OCI-LY7 (cell line): ENCODE measurements at regions of chr4 and their contacts with region 1.

Region 1: GRCh38 chr4:152663203-152664066 is 16.4 kb downstream of the TMEM154 start:
- DNase-seq: peak; percentile 90
- H3K4me3 ChIP-seq: peak overlapping the region; percentile 78
- H3K27ac ChIP-seq: peak overlapping the region; percentile 98
- H3K4me1 ChIP-seq: peaks cover 86% of the 10 kb centered on the region
- CTCF ChIP-seq: no peak

Region 2: GRCh38 chr4:152161676-152162330 is 501.6 kb before region 1 on chr4:
- CTCF ChIA-PET with region 1: no interaction called
- POLR2A ChIA-PET with region 1: no interaction called
- intact Hi-C with region 1: no loop called
- DNase-seq: no peak
- H3K4me3 ChIP-seq: no peak overlapping the region
- H3K27ac ChIP-seq: no peak overlapping the region
- H3K4me1 ChIP-seq: no peaks in the 10 kb centered on the region
- CTCF ChIP-seq: no peak

Region 3: GRCh38 chr4:152460488-152460887 is 202.9 kb before region 1 on chr4:
- CTCF ChIA-PET with region 1: no interaction called
- POLR2A ChIA-PET with region 1: interaction called, 5 read pairs
- intact Hi-C with region 1: loop called (anchors 1 kb)
- DNase-seq: peak; percentile 29
- H3K4me3 ChIP-seq: no peak overlapping the region
- H3K27ac ChIP-seq: no peak overlapping the region
- H3K4me1 ChIP-seq: peaks cover 71% of the 10 kb centered on the region
- CTCF ChIP-seq: peak; percentile 74

Region 4: GRCh38 chr4:152535903-152536544 is 127.4 kb before region 1 on chr4 and contains the start of gene FBXW7:
- CTCF ChIA-PET with region 1: no interaction called
- POLR2A ChIA-PET with region 1: interaction called, 20 read pairs
- intact Hi-C with region 1: loop called (anchors 1 kb)
- DNase-seq: peak; percentile 99
- H3K4me3 ChIP-seq: peak within 1 kb of the TSS; percentile 84
- H3K27ac ChIP-seq: peak within 1 kb of the TSS; percentile 90
- H3K4me1 ChIP-seq: peaks cover 48% of the 10 kb centered on the region
- CTCF ChIP-seq: no peak
- total RNA-seq, gene FBXW7: 58.8 and 97.7 TPM in 2 replicates

Region 5: GRCh38 chr4:152556283-152556682 is 107.2 kb before region 1 on chr4:
- CTCF ChIA-PET with region 1: no interaction called
- POLR2A ChIA-PET with region 1: interaction called, 6 read pairs
- intact Hi-C with region 1: loop called (anchors 5 kb)
- DNase-seq: peak; percentile 67
- H3K4me3 ChIP-seq: peak overlapping the region; percentile 65
- H3K27ac ChIP-seq: peak overlapping the region; percentile 46
- H3K4me1 ChIP-seq: peaks cover 65% of the 10 kb centered on the region
- CTCF ChIP-seq: no peak

Region 6: GRCh38 chr4:152679414-152680281 is 16.2 kb after region 1 on chr4 and contains the start of gene TMEM154:
- CTCF ChIA-PET with region 1: interaction called, 9 read pairs
- POLR2A ChIA-PET with region 1: interaction called, 161 read pairs
- intact Hi-C with region 1: loop called (anchors 1 kb)
- DNase-seq: peak; percentile 91
- H3K4me3 ChIP-seq: peak within 1 kb of the TSS; percentile 72
- H3K27ac ChIP-seq: peak within 1 kb of the TSS; percentile 63
- H3K4me1 ChIP-seq: peaks cover 85% of the 10 kb centered on the region
- CTCF ChIP-seq: no peak
- total RNA-seq, gene TMEM154: 16.1 and 17.6 TPM in 2 replicates

Region 7: GRCh38 chr4:153438916-153439756 is 775.7 kb after region 1 on chr4:
- CTCF ChIA-PET with region 1: no interaction called
- POLR2A ChIA-PET with region 1: interaction called, 3 read pairs
- intact Hi-C with region 1: loop called (anchors 5 kb)
- DNase-seq: peak; percentile 81
- H3K4me3 ChIP-seq: peak overlapping the region; percentile 67
- H3K27ac ChIP-seq: peak overlapping the region; percentile 94
- H3K4me1 ChIP-seq: peaks cover 94% of the 10 kb centered on the region
- CTCF ChIP-seq: peak; percentile 49